K562 (cell line): ENCODE measurements at regions of chr7 and their contacts with region 1.

Region 1: DNA sequence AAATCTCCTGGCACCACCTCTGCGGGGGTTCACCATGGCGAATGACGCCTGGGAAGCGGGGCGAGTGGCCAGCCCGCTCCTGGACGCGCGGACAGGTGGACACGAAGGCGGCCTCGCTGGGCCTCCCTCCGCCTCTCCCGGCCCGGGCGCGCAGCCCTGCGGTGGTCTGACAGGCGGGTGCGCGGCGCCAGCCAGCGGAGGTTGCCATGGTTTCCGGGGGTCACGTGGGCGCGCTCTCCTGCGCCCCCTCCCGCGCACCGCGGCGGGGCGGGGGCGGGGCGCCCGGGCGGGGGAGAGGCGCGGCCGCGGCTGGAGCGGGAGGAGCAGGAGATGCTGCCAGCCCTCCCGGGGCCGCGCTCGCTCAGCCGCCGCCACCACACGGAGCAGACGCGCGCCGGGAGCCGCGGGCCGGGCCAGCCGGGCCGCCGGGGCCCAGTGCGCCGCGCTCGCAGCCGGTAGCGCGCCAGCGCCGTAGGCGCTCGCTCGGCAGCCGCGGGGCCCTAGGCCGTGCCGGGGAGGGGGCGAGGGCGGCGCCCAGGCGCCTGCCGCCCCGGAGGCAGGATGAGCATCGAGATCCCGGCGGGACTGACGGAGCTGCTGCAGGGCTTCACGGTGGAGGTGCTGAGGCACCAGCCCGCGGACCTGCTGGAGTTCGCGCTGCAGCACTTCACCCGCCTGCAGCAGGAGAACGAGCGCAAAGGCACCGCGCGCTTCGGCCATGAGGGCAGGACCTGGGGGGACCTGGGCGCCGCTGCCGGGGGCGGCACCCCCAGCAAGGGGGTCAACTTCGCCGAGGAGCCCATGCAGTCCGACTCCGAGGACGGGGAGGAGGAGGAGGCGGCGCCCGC is at the start of gene PRKAR2B:
- DNase-seq: peak; percentile 98 to 100 (median 98)
- ATAC-seq: peak; percentile 83
- H3K4me3 ChIP-seq: peak within 1 kb of the TSS; percentile 84
- H3K27ac ChIP-seq: peak within 1 kb of the TSS; percentile 73
- H3K4me1 ChIP-seq: peaks cover 12 to 39% of the 10 kb centered on the region in 2 experiments
- H3K27me3 ChIP-seq: no peaks in the 10 kb centered on the region
- CTCF ChIP-seq: peak in 2 of 3 experiments; percentile 44 to 54; a peak in 3 of 6 replicates
- EP300 ChIP-seq: no peak; the same call in 1 of the 2 replicates
- POLR2A ChIP-seq: peak; percentile 60; the same call in 1 of the 2 replicates
- RAD21 ChIP-seq: peak; percentile 41 to 54
- polyA plus RNA-seq, gene PRKAR2B: 59.0 to 65.4 TPM

Region 2: DNA sequence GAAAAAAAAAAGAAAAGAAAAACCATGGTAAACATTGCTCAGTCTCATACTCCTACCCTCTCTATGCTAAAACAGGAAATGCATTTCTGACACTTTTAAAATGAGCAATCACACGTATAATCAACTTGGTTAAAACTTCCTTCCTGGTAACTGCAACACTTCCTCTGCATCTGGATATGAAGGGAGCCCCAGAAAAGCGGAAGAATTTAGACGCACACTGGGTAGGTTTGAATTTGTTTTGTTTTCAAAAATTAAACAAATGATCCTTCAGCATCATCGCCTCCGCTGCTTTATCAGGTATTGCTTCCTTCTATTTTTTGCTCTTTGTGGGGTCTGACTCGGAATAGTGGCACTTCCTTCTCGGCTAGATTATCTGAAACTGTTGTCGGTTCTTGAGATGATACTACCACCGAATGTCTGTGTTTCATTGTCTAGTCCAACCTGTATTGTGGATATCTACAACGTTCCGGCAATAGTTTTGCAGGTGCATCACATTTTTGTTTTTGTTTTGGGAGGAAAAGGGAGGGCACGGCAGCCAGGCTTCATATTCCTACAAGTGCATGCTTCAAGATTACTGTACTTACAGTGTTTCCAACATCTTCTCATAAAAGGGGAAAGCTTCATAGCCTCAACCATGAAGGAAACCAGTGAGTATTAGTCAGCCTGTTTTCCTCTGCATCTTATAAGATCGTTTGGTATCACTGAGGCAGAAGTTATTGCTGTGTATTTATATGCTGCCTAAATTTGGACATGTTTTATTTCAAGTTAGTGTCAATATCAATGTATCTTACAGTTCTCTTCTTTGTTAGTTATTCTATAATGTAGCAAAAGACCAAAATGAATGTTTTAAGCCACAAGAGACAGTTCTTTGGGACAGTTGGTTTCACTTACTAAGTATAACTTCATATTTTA is 179.2 kb before region 1 on chr7 and contains the start of gene PIK3CG:
- CTCF ChIA-PET with region 1: no interaction called
- POLR2A ChIA-PET with region 1: no interaction called
- in situ Hi-C with region 1: no loop called
- intact Hi-C with region 1: loop called (anchors 10 kb)
- DNase-seq: peak in 2 of 4 experiments; percentile 65 to 67
- ATAC-seq: peak; percentile 52
- H3K4me3 ChIP-seq: peak within 1 kb of the TSS; percentile 48
- H3K27ac ChIP-seq: peak within 1 kb of the TSS; percentile 79
- H3K4me1 ChIP-seq: peaks cover 15 to 53% of the 10 kb centered on the region in 2 experiments
- H3K27me3 ChIP-seq: no peaks in the 10 kb centered on the region
- CTCF ChIP-seq: no peak; a peak in 1 of 6 replicates
- EP300 ChIP-seq: peak; percentile 54
- POLR2A ChIP-seq: peak; percentile 74
- RAD21 ChIP-seq: no peak
- polyA plus RNA-seq, gene PIK3CG: 5.3 to 6.2 TPM

Region 3: DNA sequence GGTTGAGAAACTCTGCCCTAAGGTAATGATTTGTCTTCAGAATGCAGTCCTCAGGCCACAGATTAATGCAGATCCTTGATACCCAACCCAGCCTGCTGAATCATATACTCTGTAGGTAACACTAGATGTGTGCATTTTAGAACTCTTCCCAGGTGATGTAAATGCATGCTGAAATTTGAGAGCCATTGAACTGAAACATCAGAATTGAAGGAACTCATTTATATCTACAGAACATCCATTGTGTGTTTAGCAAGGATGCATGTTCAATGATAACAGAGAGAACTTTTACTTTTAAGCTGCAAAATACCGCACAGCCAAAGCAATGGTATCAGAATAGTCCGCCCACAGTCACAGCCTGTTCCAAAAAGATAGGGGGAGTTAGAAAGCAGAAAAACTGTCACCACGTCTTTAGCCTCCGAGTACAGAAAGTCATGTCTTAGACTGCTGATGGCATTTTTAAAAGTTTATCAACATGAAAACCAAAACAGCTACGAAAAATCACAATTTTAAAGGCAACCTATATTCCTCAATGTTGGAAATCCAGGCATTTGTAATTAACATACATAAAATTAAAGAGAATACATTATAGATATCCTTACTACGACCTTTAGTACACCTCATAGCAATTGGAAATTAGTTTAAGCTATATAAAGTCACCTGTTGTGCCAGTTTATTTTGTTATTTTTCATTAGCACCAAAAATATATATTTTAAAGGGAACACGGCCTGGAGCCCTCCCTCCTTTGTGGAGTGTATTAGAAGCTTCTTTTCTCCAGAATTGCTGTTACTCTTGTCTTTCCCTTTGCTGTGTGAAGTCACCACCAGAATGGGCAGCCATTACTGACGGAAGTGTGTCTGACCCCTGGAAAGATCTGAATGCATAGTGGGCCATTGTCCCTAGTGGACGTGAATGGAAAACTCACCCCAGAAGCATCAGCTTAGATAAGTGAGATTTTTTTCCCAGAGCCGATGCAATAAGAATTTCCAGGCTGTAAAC is 65.8 kb before region 1 on chr7:
- CTCF ChIA-PET with region 1: no interaction called
- POLR2A ChIA-PET with region 1: interaction called, 8 read pairs
- in situ Hi-C with region 1: no loop called
- intact Hi-C with region 1: loop called (anchors 2 kb)
- DNase-seq: peak; percentile 87 to 98 (median 92)
- ATAC-seq: peak; percentile 87
- H3K4me3 ChIP-seq: no peak overlapping the region
- H3K27ac ChIP-seq: peak overlapping the region; percentile 89
- H3K4me1 ChIP-seq: peaks cover 23 to 60% of the 10 kb centered on the region in 2 experiments
- H3K27me3 ChIP-seq: no peaks in the 10 kb centered on the region
- CTCF ChIP-seq: peak; percentile 57 to 68 (median 59)
- EP300 ChIP-seq: peak; percentile 98
- POLR2A ChIP-seq: peak; percentile 55; the same call in 1 of the 2 replicates
- RAD21 ChIP-seq: peak; percentile 10 to 68; a peak in 3 of 4 replicates

Region 4: GRCh38 chr7:107056728-107057473 is 12.3 kb after region 1 on chr7:
- CTCF ChIA-PET with region 1: no interaction called
- POLR2A ChIA-PET with region 1: interaction called, 13 read pairs
- in situ Hi-C with region 1: no loop called
- intact Hi-C with region 1: no loop called
- DNase-seq: peak in 1 of 4 experiments; percentile 47
- ATAC-seq: peak; percentile 67
- H3K4me3 ChIP-seq: peak overlapping the region; percentile 2; the same call in 1 of the 2 replicates
- H3K27ac ChIP-seq: peak overlapping the region; percentile 63
- H3K4me1 ChIP-seq: peaks cover 4 to 20% of the 10 kb centered on the region in 2 experiments; a peak in 4 of 5 replicates
- H3K27me3 ChIP-seq: no peaks in the 10 kb centered on the region
- CTCF ChIP-seq: no peak
- EP300 ChIP-seq: no peak
- POLR2A ChIP-seq: no peak
- RAD21 ChIP-seq: no peak

Region 5: DNA sequence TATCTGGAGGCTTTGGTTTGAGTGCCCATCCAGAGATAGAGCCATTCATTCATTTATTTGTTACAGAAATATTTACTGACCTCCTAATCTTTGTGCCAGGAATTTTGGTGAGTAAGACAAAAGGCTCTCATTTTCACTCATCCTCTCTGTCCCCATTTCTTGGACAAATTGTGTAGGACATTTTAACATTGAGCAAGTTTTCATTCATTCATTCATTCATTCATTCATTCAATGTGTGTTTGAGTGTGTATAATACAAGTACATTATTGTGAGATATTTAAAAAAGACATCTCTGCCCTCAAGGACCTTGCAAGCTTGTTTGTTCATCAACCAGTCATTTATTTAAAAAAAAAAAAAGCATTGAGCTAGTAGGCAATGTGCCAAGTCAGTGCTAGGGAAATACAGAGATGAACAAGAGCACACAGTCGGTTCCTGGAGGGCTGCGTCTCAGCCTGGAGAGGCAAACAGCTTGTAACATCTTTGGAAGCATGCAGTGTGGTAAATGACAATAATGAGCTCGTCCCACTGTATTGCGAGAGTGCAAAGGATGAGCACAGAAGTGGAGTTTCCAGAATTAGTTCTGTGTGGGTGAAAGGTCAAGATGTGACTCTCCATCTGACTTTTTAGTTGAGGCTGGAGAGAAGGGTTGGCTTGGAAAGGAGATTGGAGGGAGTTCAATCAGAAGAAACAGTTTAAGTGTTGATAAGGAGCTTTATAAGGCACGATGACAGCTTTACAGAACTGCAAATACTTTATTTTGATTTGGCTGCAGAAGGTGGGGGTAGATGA is 73.7 kb after region 1 on chr7:
- CTCF ChIA-PET with region 1: no interaction called
- POLR2A ChIA-PET with region 1: no interaction called
- in situ Hi-C with region 1: no loop called
- intact Hi-C with region 1: loop called (anchors 5 kb)
- DNase-seq: peak in 1 of 4 experiments; percentile 56
- ATAC-seq: no peak; the same call in 2 of the 3 replicates
- H3K4me3 ChIP-seq: no peak overlapping the region
- H3K27ac ChIP-seq: no peak overlapping the region
- H3K4me1 ChIP-seq: peaks cover 0 to 31% of the 10 kb centered on the region in 2 experiments; a peak in 3 of 5 replicates
- H3K27me3 ChIP-seq: no peaks in the 10 kb centered on the region
- CTCF ChIP-seq: no peak
- EP300 ChIP-seq: no peak
- POLR2A ChIP-seq: no peak
- RAD21 ChIP-seq: no peak

Region 6: DNA sequence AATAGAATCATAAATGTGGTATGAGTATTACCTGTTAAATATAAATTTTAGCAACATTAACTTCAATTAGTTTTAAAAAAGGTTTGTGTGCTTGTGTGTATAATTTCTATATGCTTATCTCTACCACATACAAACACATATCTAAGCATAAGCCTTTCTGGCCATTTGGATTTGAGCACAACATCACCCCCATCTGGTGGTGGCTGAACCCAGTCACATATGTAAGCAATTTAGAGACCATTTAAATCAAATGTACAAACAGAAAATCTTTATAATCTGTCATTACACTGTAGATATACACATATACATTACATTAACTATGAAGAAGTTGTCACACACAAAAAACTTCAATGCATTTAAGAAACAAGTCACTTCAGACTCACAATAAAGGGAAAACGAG is 457.0 kb after region 1 on chr7:
- CTCF ChIA-PET with region 1: no interaction called
- POLR2A ChIA-PET with region 1: no interaction called
- in situ Hi-C with region 1: no loop called
- intact Hi-C with region 1: no loop called
- DNase-seq: peak; percentile 47 to 76 (median 62)
- ATAC-seq: peak; percentile 92
- H3K4me3 ChIP-seq: no peak overlapping the region
- H3K27ac ChIP-seq: no peak overlapping the region
- H3K4me1 ChIP-seq: peaks cover 2 to 3% of the 10 kb centered on the region in 2 experiments; a peak in 2 of 5 replicates
- H3K27me3 ChIP-seq: no peaks in the 10 kb centered on the region
- CTCF ChIP-seq: peak; percentile 63 to 96 (median 84); a peak in 5 of 6 replicates
- EP300 ChIP-seq: no peak
- POLR2A ChIP-seq: no peak
- RAD21 ChIP-seq: peak; percentile 89 to 92